Transverse colon (tissue), 4 donors: ENCODE measurements at regions of chr12 and their contacts with region 1.

Region 1: GRCh38 chr12:108418164-108418890 is 79.2 kb upstream of the CMKLR1 start:
- DNase-seq: no peak
- H3K4me3 ChIP-seq: no peak overlapping the region
- H3K27ac ChIP-seq: no peak overlapping the region
- H3K4me1 ChIP-seq: no peaks in the 10 kb centered on the region
- H3K27me3 ChIP-seq: no peaks in the 10 kb centered on the region
- CTCF ChIP-seq: no peak
- EP300 ChIP-seq: no peak
- POLR2A ChIP-seq: no peak

Region 2: DNA sequence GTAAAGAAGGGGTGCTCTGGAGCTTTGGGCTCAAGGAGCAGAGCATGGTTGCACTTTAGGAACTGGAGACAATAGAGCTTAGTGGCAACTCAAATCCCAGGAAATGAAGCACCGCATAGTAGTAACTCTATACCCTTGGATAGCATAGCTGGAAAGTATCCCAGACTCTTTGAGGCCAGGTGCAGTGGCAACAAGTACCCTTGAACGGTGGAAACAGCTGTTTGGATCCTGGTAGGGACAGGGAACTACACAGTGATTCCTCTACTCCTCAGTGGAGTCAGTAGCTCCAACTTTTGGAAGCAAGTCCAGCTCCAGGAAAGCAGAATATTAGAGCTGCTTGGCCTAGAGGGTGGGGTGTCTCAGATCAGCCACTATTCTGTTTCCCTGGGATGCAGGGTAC is 418.2 kb before region 1 on chr12:
- in situ Hi-C with region 1: no loop called
- intact Hi-C with region 1: no loop called
- DNase-seq: no peak
- H3K4me3 ChIP-seq: no peak overlapping the region
- H3K27ac ChIP-seq: no peak overlapping the region
- H3K4me1 ChIP-seq: no peaks in the 10 kb centered on the region
- H3K27me3 ChIP-seq: peaks cover 6% of the 10 kb centered on the region
- CTCF ChIP-seq: no peak
- EP300 ChIP-seq: no peak
- POLR2A ChIP-seq: no peak

Region 3: GRCh38 chr12:108403952-108404351 is 14.4 kb before region 1 on chr12:
- in situ Hi-C with region 1: no loop called
- intact Hi-C with region 1: loop called (anchors 1 kb)
- DNase-seq: no peak
- H3K4me3 ChIP-seq: no peak overlapping the region
- H3K27ac ChIP-seq: no peak overlapping the region
- H3K4me1 ChIP-seq: no peaks in the 10 kb centered on the region
- H3K27me3 ChIP-seq: no peaks in the 10 kb centered on the region
- CTCF ChIP-seq: no peak
- EP300 ChIP-seq: no peak
- POLR2A ChIP-seq: no peak

Region 4: GRCh38 chr12:109650808-109651207 is 1232.5 kb after region 1 on chr12:
- in situ Hi-C with region 1: no loop called
- intact Hi-C with region 1: no loop called
- DNase-seq: no peak
- H3K4me3 ChIP-seq: no peak overlapping the region
- H3K27ac ChIP-seq: no peak overlapping the region
- H3K4me1 ChIP-seq: no peaks in the 10 kb centered on the region
- H3K27me3 ChIP-seq: no peaks in the 10 kb centered on the region
- CTCF ChIP-seq: no peak
- EP300 ChIP-seq: no peak
- POLR2A ChIP-seq: no peak